ENCODE measurements at regions of chr3 and their contacts with region 1.

Region 1: GRCh38 chr3:150546226-150547044 is at the starts of genes EIF2A and SERP1:
- DNase-seq: peak; percentile 99
- ATAC-seq: peak; percentile 98
- total RNA-seq, gene EIF2A: 68.9 TPM
- total RNA-seq, gene SERP1: 23.7 TPM

Region 2: DNA sequence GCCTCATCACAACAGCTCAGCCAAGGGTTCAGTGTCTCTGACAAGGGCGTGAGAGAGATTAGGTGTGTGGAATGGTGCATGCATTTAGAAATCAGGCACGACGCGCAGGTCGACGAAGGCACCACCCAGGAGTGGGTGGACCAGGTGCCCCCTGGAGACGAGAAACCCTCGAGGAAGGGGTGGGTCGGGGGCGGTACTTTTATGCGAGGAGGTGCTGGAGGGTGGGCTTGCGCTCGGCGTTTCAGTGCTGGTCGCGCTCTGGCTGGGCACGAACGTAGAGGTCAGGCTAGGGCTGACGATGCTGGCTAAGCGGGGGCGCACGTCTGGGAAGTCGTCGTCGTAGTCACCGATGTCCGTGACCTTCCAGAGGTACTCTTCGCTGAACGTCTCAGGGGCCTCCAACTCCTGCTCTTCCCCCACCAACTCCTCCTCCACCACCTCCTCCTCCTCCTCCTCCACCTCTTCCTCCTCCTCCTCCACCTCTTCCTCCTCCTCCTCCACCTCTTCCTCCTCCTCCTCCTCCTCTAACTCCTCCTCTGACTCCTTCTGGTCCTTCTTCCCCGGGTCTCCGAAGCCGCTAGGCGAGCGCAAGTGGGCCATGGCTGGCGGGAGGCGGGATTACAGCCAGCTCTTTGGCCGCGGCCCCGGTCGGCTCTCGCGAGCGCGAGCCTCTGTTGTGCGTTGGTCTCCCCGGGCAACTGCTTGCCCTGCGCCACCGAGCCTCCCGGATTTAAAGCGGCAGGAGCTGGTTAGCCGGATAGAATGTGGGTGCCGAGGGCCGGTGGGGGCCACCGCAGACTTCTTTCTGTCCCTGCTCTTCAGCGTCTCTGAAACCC is 157.1 kb after region 1 on chr3 and contains the start of gene ERICH6:
- intact Hi-C with region 1: loop called (anchors 2 kb)
- DNase-seq: peak; percentile 97
- ATAC-seq: peak; percentile 99
- total RNA-seq, gene ERICH6: not detected

Region 3: GRCh38 chr3:150763122-150763841 is 216.8 kb after region 1 on chr3 and contains the start of gene SIAH2:
- intact Hi-C with region 1: loop called (anchors 5 kb)
- DNase-seq: peak; percentile 97
- ATAC-seq: peak; percentile 91
- total RNA-seq, gene SIAH2: 20.6 TPM

Measured in Right ventricle myocardium inferior (tissue), 1 donor.